Posterior cingulate gyrus (tissue), 11 donors: ENCODE measurements at regions of chr17 and their contacts with region 1.

Region 1: GRCh38 chr17:28644985-28645939 is at the start of gene BLTP2:
- DNase-seq: peak; percentile 90 to 99 (median 96)

Region 2: DNA sequence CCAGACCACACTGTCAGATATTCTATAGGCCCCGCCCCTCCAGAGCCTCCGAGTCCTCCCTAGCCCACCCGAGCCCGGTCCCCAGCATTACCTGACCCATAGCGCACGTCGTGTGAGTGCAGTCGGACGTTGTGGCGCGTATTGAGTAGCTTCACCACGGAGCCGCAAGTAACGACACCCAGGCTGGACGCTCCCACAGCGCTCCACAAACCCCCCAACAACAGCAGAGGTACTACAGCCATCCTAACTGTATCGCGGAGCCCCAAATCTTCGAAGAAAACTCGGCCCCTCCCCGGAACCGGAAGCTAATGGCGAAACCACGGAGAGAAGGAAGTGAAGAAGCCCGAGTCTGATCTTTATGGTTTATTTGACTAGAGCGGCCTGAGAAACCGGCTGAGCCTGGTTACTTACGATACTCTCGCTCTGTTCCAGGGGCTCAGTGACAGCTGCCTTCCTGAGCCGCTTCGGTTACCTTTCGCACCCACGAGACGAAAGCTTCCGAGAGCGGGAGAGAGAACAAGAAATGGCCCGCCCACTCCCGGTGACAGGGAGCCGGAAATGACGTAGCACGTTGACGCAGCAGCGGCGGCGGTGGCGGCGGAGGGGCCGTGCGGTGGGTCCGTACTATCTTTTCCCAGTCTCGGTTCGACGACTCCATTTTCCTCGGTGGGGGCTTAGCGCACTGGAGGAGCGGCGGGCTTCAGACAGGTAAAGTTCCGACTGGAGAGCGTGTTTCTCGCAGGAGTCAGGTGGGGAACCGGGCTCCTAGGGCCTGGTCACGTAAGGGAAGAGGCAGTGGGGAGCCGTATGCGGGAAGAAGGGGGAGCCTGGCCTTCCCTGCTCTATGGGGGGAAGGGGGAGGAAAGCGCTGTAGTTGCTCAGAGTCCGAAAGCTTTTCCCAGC is 16.6 kb after region 1 on chr17 and contains the starts of genes SDF2 and SUPT6H:
- intact Hi-C with region 1: loop called (anchors 1 kb)
- DNase-seq: peak; percentile 88 to 99 (median 95)

Region 3: DNA sequence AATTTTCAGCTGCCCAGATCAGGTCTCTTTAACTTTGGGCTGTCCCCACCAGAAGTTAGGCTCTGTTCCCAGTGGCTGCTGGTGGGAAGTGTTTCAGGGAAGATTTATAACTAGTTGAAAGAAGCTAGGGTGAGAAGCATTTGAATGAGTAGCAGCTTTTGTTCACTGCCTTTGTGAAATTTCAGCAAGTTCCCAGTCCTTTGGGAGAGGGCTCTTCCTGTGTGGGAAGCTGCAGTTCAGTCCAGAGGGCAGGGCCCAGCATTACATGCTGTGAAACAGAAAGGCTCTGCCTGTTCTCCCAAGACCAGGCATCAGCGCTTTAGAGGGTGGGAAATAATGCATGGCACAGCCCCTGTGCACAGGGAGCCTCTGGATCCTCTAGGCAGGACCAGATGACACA is 48.6 kb after region 1 on chr17:
- intact Hi-C with region 1: no loop called
- DNase-seq: peak in 2 of 10 donors; percentile 6 to 71

Region 4: DNA sequence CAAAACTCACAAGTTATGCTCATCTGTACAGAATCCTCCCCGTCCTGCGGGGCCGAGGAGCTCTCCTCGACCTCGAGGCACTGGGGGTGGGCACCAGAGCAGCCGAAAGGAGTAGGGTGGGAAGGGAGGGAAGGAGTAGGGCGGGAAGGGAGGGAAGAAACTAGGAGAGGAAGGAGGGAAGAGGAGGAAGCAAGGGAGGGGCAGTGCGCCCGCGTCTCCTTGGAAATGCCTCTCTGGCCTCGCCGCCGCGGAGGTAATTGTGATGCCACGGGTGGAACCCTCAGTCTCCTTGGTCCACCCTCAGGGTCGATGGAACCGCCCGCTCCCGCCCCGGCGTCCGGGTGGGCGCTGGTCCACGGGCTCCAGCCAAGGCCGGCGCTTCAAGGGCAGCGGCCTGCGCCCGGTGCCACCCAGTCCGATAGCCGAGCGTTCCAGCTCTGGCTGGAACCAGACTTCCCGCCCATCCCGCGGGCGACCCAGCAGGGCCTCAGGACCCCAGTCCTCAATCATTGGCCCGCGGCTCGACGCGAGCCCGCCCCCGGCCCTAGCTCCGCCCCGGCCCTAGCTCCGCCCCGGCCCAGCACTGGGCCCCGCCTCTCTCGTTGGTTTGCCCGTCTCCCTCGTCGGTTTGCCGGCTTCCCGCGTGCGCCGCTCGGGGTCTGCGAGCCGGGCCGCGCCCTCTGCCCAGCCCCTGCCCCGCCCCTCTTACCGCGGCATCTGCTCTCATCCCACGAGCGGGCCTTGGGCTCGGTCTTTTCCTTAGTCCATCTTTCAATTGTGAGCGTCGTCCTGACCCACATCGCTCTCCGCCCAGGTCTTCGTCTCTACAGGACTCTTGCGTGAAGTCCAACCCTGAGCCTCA is 65.8 kb after region 1 on chr17:
- intact Hi-C with region 1: loop called (anchors 10 kb)
- DNase-seq: peak; percentile 75 to 98 (median 85)